Panc1 (cell line): ENCODE measurements at regions of chr10 and their contacts with region 1.

Region 1: DNA sequence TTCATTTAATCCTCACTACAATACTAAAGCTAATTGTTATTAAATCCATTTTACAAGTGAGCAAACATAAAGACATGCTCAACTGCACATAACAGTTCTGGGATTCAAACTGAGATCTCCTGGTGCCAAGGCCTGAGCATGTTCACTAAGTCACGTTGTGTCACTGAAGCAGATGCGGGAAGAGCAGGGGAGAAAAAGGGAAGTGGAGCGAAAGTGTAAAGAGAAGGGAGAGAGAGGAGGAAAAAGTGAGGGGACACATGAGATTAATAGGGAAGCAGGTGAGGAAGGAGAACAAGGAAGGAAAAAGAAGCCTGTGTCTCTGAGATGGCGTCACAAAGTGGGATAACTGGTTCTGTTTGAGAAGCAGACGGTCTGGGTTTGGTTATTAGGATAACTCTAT is 38.9 kb upstream of the KAT6B start:
- DNase-seq: no peak
- ATAC-seq: no peak
- H3K4me3 ChIP-seq: no peak overlapping the region
- H3K27ac ChIP-seq: no peak overlapping the region
- H3K4me1 ChIP-seq: no peaks in the 10 kb centered on the region
- H3K27me3 ChIP-seq: no peaks in the 10 kb centered on the region
- CTCF ChIP-seq: no peak

Region 2: GRCh38 chr10:74753442-74754211 is 33.8 kb before region 1 on chr10:
- CTCF ChIA-PET with region 1: no interaction called
- POLR2A ChIA-PET with region 1: interaction called, 10 read pairs
- in situ Hi-C with region 1: no loop called
- intact Hi-C with region 1: no loop called
- DNase-seq: no peak
- ATAC-seq: peak; percentile 61; the same call in 1 of the 2 replicates
- H3K4me3 ChIP-seq: no peak overlapping the region
- H3K27ac ChIP-seq: peak overlapping the region; percentile 12; the same call in 1 of the 2 replicates
- H3K4me1 ChIP-seq: no peaks in the 10 kb centered on the region
- H3K27me3 ChIP-seq: no peaks in the 10 kb centered on the region
- CTCF ChIP-seq: no peak

Region 3: GRCh38 chr10:74760086-74760979 is 27.1 kb before region 1 on chr10:
- CTCF ChIA-PET with region 1: no interaction called
- POLR2A ChIA-PET with region 1: interaction called, 10 read pairs
- in situ Hi-C with region 1: no loop called
- intact Hi-C with region 1: no loop called
- DNase-seq: no peak
- ATAC-seq: no peak
- H3K4me3 ChIP-seq: no peak overlapping the region
- H3K27ac ChIP-seq: no peak overlapping the region
- H3K4me1 ChIP-seq: no peaks in the 10 kb centered on the region
- H3K27me3 ChIP-seq: no peaks in the 10 kb centered on the region
- CTCF ChIP-seq: no peak

Region 4: GRCh38 chr10:74771054-74771453 is 16.4 kb before region 1 on chr10:
- CTCF ChIA-PET with region 1: no interaction called
- POLR2A ChIA-PET with region 1: no interaction called
- in situ Hi-C with region 1: no loop called
- intact Hi-C with region 1: no loop called
- DNase-seq: no peak
- ATAC-seq: no peak
- H3K4me3 ChIP-seq: no peak overlapping the region
- H3K27ac ChIP-seq: no peak overlapping the region
- H3K4me1 ChIP-seq: no peaks in the 10 kb centered on the region
- H3K27me3 ChIP-seq: no peaks in the 10 kb centered on the region
- CTCF ChIP-seq: no peak